ENCODE measurements at regions of chr12 and their contacts with region 1.

Region 1: DNA sequence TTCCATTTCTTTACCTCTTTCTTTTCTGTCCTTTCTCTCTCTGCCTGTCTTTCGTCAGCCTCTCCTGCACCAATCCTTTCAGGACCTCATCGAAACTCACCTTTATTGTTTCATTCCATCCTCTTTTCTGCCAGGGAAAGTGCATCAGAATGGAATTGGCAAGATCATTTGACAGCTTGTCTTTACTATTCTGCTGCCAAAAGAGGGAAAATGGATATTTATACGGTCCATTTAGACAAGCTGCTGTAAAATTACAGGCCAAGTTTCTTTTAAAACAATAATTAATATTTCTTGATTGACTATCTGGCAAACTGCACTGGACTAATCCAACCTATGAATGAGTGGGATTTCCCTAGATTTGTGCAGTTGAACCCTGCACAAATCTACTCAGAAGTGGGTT is 7.6 kb upstream of the SRGAP1 start:
- DNase-seq: no peak
- CTCF ChIP-seq: no peak

Region 2: DNA sequence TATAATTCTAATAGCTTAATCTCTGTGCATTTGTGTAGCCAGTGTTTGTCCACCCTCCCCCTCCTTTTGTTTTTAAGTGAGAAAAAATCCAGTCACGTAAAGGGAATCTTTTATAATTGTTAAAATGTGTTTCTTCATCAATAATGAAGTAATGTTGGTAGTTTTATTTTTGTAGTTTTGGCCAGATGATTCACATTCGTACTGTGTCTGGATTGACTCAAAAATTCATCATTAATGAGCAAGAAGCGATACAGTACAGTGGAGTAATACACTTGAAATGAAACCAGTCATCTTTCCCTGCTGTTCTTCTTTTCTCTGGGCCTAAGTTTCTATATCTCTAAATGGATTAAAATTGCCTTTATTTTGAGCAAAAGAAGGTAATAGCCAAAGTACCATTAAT is 94.0 kb after region 1 on chr12:
- in situ Hi-C with region 1: no loop called
- DNase-seq: no peak
- CTCF ChIP-seq: no peak

Region 3: DNA sequence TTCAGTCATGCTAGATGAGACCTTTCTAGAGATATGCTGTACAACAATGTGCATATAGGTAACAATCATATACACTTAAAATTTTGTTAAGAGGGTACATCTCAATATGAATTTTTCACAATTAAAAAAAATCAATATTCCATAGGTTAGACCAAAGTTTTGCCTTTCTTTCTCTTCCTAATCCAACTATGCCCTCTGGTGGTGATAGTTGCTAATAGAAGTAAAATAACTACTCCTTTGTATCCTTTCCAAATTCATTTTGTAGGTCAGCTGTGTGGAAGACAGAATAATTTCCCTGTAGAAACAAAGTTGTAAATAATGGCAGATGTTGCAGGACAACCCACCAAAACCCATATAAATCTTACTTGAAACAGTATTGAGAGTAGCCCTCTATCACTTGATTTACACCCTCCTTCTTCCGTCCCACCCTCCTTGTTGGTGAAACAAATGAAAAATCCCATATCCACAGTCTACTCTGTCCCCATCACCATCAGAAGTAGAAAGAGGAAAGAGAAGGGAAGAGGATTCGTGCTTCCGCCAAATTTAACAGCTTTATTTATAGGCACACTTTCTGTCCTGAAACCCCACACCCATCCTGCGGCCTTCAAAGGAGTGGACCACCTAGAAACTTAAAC is 419.3 kb after region 1 on chr12:
- in situ Hi-C with region 1: loop called (anchors 10 kb)
- DNase-seq: peak; percentile 33
- CTCF ChIP-seq: peak; percentile 50